Dendritic cell treated with granulocyte-macrophage colony-stimulating factor and Interleukin-4, amounts not matched to agents 40 ng/mL and 50 ng/mL, for 4 days (primary cell): ENCODE measurements at regions of chr14 and their contacts with region 1.

Region 1: DNA sequence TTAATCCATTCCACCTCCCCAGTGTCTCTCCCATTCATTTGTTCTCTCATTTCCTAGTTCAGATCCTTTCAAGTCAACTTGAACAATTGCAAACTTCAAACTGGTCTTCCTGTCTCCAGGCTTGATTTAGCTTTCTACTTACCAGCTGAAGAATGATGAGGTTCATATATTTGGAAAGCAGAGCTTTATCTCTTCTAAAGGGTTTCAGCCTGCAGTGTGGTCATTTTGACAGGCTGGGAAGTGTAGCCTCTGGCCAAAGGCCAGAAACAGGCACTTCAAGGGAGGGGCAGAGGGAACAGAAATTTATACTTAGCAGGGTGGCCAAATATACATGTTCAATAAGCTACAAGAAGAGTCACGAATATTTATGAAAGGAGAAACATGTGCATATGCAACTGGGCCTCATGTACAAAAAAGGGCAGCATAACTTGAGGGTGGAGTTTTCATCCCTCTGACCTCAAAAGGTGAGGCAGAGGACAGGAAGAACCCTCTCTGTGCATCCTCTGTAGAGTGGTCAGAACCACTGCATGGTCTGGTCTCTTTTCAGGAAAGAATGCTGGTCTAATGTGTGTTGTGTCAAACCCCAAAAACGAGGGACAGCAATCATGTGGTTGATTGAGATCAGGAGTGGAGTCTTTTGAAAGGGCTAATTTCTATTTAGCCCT is 34.0 kb upstream of the HECTD1 start:
- H3K4me3 Mint-ChIP-seq: no peak overlapping the region
- H3K27ac Mint-ChIP-seq: peak overlapping the region; percentile 2
- H3K4me1 Mint-ChIP-seq: peaks cover 28% of the 10 kb centered on the region
- H3K27me3 Mint-ChIP-seq: no peaks in the 10 kb centered on the region

Region 2: GRCh38 chr14:31159682-31160296 is 81.8 kb before region 1 on chr14:
- intact Hi-C with region 1: no loop called
- H3K4me3 Mint-ChIP-seq: no peak overlapping the region
- H3K27ac Mint-ChIP-seq: no peak overlapping the region
- H3K4me1 Mint-ChIP-seq: no peaks in the 10 kb centered on the region
- H3K27me3 Mint-ChIP-seq: no peaks in the 10 kb centered on the region

Region 3: GRCh38 chr14:31229638-31230229 is 11.8 kb before region 1 on chr14:
- intact Hi-C with region 1: loop called (anchors 1 kb)
- H3K4me3 Mint-ChIP-seq: peak overlapping the region; percentile 49
- H3K27ac Mint-ChIP-seq: no peak overlapping the region
- H3K4me1 Mint-ChIP-seq: peaks cover 8% of the 10 kb centered on the region
- H3K27me3 Mint-ChIP-seq: no peaks in the 10 kb centered on the region

Region 4: DNA sequence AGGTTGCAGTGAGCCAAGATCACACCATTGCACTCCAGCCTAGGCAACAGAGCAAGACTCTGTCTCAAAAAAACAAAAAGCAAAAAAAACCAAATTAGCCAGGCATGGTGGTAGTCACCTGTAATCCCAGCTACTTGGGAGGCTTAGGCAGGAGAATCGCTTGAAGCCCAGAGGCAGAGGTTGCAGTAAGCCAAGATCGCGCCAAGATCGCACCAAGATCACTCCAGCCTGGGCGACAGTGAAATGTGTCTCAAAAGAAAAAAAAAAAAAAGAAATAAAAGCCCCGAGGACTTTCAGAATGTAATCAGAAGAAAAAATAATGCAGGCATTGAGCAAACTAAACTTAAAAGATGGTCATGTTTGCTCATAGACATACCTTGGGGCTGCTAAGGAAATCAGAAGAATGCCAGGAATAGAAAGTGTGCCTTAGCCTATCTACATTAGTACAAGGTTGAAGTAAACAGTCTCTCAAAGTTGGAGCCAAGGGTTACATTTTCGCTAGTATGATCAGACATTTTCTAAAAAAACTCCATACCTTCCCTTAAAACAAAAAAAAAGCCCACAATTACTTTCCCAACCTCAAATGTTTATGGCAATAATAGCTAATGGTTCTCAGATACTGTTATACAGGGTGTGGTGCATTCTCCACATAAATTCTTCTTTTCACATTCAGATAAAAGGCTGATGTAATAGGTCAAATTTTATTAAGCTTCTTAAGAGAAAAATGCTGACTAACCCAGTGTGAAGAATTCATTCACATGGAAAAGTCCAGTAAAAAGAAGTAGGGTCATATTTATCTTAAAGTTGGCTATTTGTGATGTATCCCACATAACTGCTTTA is 199.9 kb after region 1 on chr14:
- intact Hi-C with region 1: no loop called
- H3K4me3 Mint-ChIP-seq: no peak overlapping the region
- H3K27ac Mint-ChIP-seq: no peak overlapping the region
- H3K4me1 Mint-ChIP-seq: peaks cover 2% of the 10 kb centered on the region
- H3K27me3 Mint-ChIP-seq: no peaks in the 10 kb centered on the region